ENCODE measurements at regions of chr16 and their contacts with region 1.

Region 1: DNA sequence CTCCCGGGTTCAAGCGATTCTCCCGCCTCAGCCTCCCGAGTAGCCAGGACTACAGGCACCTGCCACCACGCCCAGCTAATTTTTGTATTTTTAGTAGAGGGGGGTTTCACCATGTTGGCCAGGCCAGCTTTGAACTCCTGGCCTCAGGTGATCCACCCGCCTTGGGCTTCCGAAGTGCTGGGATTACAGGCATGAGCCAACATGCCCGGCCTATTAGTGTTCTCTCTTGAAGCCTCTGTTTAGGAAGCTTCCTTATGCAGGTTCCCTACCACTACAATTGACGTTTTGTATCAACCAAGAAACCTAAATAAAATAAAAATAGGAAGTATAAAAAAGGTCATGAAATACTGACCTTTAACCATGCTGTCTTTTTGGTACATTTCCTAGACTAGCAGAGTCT is 16.0 kb downstream of the CHST5 start:
- DNase-seq: no peak
- H3K4me3 Mint-ChIP-seq: no peak overlapping the region
- H3K27ac Mint-ChIP-seq: no peak overlapping the region
- H3K4me1 Mint-ChIP-seq: peaks cover 13% of the 10 kb centered on the region
- H3K27me3 Mint-ChIP-seq: peaks cover 1% of the 10 kb centered on the region

Region 2: GRCh38 chr16:75464130-75464918 is 55.6 kb before region 1 on chr16 and contains the start of gene TMEM170A:
- CTCF ChIA-PET with region 1: interaction called, 22 read pairs
- POLR2A ChIA-PET with region 1: no interaction called
- DNase-seq: peak; percentile 98
- H3K4me3 Mint-ChIP-seq: peak within 1 kb of the TSS; percentile 83
- H3K27ac Mint-ChIP-seq: peak within 1 kb of the TSS; percentile 92
- H3K4me1 Mint-ChIP-seq: peaks cover 42% of the 10 kb centered on the region
- H3K27me3 Mint-ChIP-seq: no peaks in the 10 kb centered on the region
- total RNA-seq, gene TMEM170A: 35.1 to 36.3 TPM

Region 3: DNA sequence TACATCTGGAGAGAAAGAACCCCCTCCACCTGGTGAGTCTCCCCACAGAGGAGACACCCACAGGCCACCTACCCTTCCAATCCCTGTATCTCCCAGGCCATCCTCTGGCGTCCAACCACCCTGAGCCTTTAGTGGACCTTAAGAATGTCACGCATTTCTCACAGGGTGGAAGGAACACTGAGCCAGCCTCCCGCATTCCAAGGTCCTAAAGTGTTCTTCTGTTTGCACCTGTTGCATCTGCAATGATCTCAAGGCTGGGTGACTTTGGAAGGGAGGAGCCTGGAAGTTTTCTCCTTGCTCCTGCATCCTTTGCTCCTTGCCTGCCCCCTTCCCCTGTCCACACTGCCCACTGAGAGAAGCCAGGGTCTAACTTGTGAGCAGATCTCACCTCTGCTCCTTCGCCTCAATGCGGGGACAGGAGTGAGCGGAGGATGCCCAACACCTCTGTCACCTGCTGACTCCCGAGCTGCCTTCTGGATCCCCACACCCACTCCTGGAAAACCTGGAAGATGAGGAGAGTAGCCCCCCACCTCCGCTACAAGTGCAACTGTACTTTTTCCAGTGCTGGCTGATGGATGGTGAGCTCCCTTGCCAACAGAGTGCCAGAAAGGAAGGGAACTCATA is 12.4 kb after region 1 on chr16:
- CTCF ChIA-PET with region 1: interaction called, 11 read pairs
- POLR2A ChIA-PET with region 1: no interaction called
- DNase-seq: no peak
- H3K4me3 Mint-ChIP-seq: no peak overlapping the region
- H3K27ac Mint-ChIP-seq: no peak overlapping the region
- H3K4me1 Mint-ChIP-seq: no peaks in the 10 kb centered on the region
- H3K27me3 Mint-ChIP-seq: no peaks in the 10 kb centered on the region

Region 4: GRCh38 chr16:75550211-75550662 is 30.4 kb after region 1 on chr16:
- CTCF ChIA-PET with region 1: interaction called, 12 read pairs
- POLR2A ChIA-PET with region 1: no interaction called
- DNase-seq: peak; percentile 54
- H3K4me3 Mint-ChIP-seq: no peak overlapping the region
- H3K27ac Mint-ChIP-seq: no peak overlapping the region
- H3K4me1 Mint-ChIP-seq: peaks cover 17% of the 10 kb centered on the region
- H3K27me3 Mint-ChIP-seq: peaks cover 12% of the 10 kb centered on the region

Region 5: DNA sequence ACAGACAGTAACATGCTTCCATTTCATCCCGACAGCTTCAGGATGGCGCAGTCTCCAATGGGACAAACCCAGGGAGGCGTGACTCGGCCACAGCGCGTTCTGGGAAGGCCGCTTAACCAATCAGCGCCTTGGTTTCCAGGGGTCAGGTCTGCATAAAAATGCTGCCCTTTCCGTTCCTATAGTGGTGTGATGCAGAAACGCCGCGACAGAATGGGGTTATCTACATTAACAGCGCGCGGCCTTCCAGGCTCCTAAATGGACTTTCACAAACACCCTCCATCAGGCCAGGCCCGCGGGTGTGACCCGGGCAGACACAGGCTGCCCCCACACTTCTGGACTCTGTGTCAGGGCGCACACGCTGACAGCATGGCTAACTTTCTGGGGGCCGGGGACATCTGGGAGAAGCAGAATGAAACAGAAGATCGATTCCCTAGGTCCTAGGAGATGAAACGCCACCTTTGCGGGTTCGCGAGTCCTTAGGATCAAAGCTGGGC is 35.4 kb after region 1 on chr16:
- CTCF ChIA-PET with region 1: interaction called, 12 read pairs
- POLR2A ChIA-PET with region 1: no interaction called
- DNase-seq: no peak
- H3K4me3 Mint-ChIP-seq: peak overlapping the region; percentile 82
- H3K27ac Mint-ChIP-seq: peak overlapping the region; percentile 79
- H3K4me1 Mint-ChIP-seq: peaks cover 18% of the 10 kb centered on the region
- H3K27me3 Mint-ChIP-seq: peaks cover 16% of the 10 kb centered on the region

Region 6: DNA sequence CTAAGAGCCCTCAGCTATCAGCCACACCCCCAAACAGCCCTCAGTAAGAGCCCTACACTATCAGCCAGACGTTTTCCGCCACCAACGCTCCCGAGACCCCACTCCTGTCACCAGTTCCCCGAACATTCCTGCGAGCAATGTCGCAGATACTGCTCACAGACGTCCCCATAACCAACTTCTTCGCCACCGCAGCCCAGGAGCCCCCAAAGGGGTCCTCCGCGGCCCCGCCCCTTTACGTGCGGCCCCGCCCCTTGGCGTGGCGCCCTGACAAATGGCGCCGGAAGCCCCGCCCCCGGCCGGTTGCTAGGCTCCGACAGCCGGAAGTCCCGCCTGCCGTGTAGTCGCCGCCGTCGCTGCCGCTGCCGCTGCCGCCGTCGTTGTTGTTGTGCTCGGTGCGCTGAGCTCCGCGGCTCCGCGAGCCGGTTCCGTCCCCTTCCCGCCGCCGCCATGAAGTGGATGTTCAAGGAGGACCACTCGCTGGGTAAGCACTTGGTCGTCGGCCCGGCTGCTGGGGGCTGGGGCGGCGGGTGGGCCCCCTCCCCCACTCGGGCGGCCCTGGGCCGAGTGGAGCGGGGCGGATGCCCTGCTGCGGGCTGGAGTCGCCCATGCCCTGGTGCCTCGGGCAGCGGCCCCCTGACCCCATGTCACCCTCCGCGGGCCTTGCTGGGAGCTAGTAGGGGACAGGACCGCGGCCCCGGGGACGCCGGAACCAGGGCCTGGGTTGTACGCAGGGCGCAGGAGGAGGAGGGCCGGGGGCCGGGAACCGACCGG is 46.3 kb after region 1 on chr16 and contains the start of gene GABARAPL2:
- CTCF ChIA-PET with region 1: interaction called, 11 read pairs
- POLR2A ChIA-PET with region 1: no interaction called
- DNase-seq: peak; percentile 89
- H3K4me3 Mint-ChIP-seq: peak within 1 kb of the TSS; percentile 91
- H3K27ac Mint-ChIP-seq: peak within 1 kb of the TSS; percentile 92
- H3K4me1 Mint-ChIP-seq: peaks cover 39% of the 10 kb centered on the region
- H3K27me3 Mint-ChIP-seq: peaks cover 13% of the 10 kb centered on the region
- total RNA-seq, gene GABARAPL2: 60.7 to 66.2 TPM

Region 7: DNA sequence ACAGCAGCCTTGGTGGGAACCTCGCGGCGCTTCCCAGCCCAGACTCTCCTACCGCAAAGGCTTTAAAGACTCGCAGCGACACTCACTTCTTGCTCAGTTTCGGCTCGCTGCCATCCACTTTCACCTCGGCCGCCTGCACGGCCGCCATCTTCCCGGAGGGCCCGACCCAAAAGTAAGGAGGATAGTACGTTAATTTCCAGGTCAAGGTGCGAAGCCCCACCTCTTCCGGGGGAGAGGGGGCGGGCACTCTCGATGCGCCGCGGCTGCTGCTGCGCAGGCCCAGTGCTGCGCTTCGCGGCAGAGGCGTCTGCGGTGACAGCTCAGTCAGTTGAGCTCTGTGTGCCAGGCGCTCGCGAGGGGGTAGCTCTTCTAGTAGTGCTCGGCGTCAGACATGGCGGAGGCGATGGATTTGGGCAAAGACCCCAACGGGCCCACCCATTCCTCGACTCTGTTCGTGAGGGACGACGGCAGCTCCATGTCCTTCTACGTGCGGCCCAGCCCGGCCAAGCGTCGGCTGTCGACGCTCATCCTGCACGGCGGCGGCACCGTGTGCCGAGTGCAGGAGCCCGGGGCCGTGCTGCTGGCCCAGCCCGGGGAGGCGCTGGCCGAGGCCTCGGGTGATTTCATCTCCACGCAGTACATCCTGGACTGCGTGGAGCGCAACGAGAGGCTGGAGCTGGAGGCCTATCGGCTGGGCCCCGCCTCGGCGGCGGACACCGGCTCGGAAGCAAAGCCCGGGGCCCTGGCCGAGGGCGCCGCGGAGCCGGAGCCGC is 127.8 kb after region 1 on chr16 and contains the starts of genes KARS1 and TERF2IP:
- CTCF ChIA-PET with region 1: interaction called, 13 read pairs
- POLR2A ChIA-PET with region 1: no interaction called
- DNase-seq: peak; percentile 95
- H3K4me3 Mint-ChIP-seq: peak within 1 kb of the TSS; percentile 99
- H3K27ac Mint-ChIP-seq: peak within 1 kb of the TSS; percentile 94
- H3K4me1 Mint-ChIP-seq: peaks cover 66% of the 10 kb centered on the region
- H3K27me3 Mint-ChIP-seq: no peaks in the 10 kb centered on the region
- total RNA-seq, gene KARS1: 185 to 207 TPM
- total RNA-seq, gene TERF2IP: 69.2 to 70.1 TPM